Ovary (tissue), 10 donors: ENCODE measurements at regions of chr1 and their contacts with region 1.

Region 1: GRCh38 chr1:33295450-33296081 is 25.3 kb downstream of the A3GALT2 start:
- DNase-seq: peak; percentile 78 to 93 (median 90)
- H3K4me3 ChIP-seq: no peak overlapping the region
- H3K27ac ChIP-seq: no peak overlapping the region
- H3K4me1 ChIP-seq: peaks cover 3% of the 10 kb centered on the region
- H3K27me3 ChIP-seq: no peaks in the 10 kb centered on the region
- CTCF ChIP-seq: peak; percentile 96 to 97 (median 96)
- EP300 ChIP-seq: no peak
- POLR2A ChIP-seq: peak; percentile 28

Region 2: GRCh38 chr1:33367485-33368405 is 72.2 kb after region 1 on chr1:
- intact Hi-C with region 1: loop called (anchors 2 to 5 kb)
- DNase-seq: peak; percentile 86 to 92 (median 91)
- H3K4me3 ChIP-seq: no peak overlapping the region
- H3K27ac ChIP-seq: no peak overlapping the region
- H3K4me1 ChIP-seq: peaks cover 17% of the 10 kb centered on the region
- H3K27me3 ChIP-seq: no peaks in the 10 kb centered on the region
- CTCF ChIP-seq: peak; percentile 91 to 95 (median 93)
- EP300 ChIP-seq: no peak
- POLR2A ChIP-seq: peak; percentile 33

Region 3: GRCh38 chr1:33455539-33456501 is 160.3 kb after region 1 on chr1:
- intact Hi-C with region 1: loop called in 2 of 4 experiments (anchors 5 to 10 kb)
- DNase-seq: peak in 3 of 5 donors; percentile 47 to 64 (median 62)
- H3K4me3 ChIP-seq: no peak overlapping the region
- H3K27ac ChIP-seq: peak overlapping the region in 1 of 2 donors; percentile 22
- H3K4me1 ChIP-seq: peaks cover 14% of the 10 kb centered on the region
- H3K27me3 ChIP-seq: no peaks in the 10 kb centered on the region
- CTCF ChIP-seq: no peak
- EP300 ChIP-seq: no peak
- POLR2A ChIP-seq: no peak

Region 4: GRCh38 chr1:33466159-33466558 is 170.6 kb after region 1 on chr1:
- intact Hi-C with region 1: loop called in 3 of 4 experiments (anchors 5 to 10 kb)
- DNase-seq: no peak
- H3K4me3 ChIP-seq: no peak overlapping the region
- H3K27ac ChIP-seq: no peak overlapping the region
- H3K4me1 ChIP-seq: peaks cover 4% of the 10 kb centered on the region
- H3K27me3 ChIP-seq: no peaks in the 10 kb centered on the region
- CTCF ChIP-seq: no peak
- EP300 ChIP-seq: no peak
- POLR2A ChIP-seq: no peak